HCT116 (cell line): ENCODE measurements at regions of chr2 and their contacts with region 1.

Region 1: GRCh38 chr2:168920504-168921157 is 19.5 kb downstream of the G6PC2 start:
- DNase-seq: peak; percentile 13
- ATAC-seq: peak; percentile 60
- H3K4me3 ChIP-seq: no peak overlapping the region
- H3K27ac ChIP-seq: no peak overlapping the region
- H3K4me1 ChIP-seq: no peaks in the 10 kb centered on the region
- H3K27me3 ChIP-seq: no peaks in the 10 kb centered on the region
- CTCF ChIP-seq: peak; percentile 39 to 73 (median 68)
- POLR2A ChIP-seq: no peak
- RAD21 ChIP-seq: peak; percentile 80

Region 2: DNA sequence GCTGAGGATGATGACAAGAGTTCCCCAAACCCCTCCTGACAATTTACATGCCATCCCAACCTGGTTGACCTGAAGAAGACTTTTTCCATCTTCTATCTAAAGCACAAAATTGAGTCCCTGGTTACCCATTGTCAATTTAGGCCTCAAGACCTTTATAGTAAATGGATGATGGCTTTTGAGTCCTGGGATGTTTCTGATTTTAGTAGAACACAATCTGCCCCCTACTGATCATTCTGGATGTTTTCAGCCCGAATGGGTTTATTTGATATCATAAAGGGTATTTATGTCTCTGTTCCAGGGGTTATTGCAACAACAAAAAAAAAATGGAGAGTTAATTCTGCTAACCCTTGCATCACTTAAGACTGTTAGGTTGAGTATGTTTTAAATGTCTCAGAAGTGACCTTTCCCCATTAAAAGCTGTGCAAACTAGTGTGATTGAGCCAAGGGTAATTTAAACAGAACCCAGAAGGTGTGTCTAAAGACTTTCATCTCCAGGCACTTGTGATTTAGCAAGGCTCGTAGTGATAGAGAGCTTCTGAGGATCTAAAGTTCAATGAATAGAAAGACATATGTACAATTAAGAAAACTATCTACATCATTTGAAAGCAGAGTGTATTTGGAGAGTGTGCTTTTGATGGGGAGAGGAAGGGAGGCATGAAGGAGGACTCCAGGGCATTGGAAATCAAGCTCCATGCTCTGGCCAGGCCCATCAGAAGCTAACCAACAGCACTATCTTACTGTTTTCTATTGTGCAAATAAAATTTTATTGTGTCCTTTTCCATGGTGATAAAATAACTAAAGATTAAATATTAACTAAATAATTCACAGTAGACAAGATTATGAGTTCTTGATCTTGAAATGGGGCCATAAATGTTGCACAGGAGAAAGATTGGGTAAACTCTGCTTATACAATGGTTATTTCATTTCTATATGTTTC is 214.8 kb before region 1 on chr2:
- CTCF ChIA-PET with region 1: no interaction called
- POLR2A ChIA-PET with region 1: no interaction called
- RAD21 ChIA-PET with region 1: no interaction called
- intact Hi-C with region 1: loop called (anchors 10 kb)
- DNase-seq: no peak
- ATAC-seq: no peak
- H3K4me3 ChIP-seq: no peak overlapping the region
- H3K27ac ChIP-seq: no peak overlapping the region
- H3K4me1 ChIP-seq: no peaks in the 10 kb centered on the region
- H3K27me3 ChIP-seq: no peaks in the 10 kb centered on the region
- CTCF ChIP-seq: peak; percentile 24 to 48 (median 35); a peak in 4 of 6 replicates
- POLR2A ChIP-seq: no peak
- RAD21 ChIP-seq: peak; percentile 57

Region 3: GRCh38 chr2:168773719-168774521 is 146.7 kb before region 1 on chr2:
- CTCF ChIA-PET with region 1: interaction called, 7 read pairs
- POLR2A ChIA-PET with region 1: no interaction called
- RAD21 ChIA-PET with region 1: no interaction called
- intact Hi-C with region 1: loop called (anchors 1 kb)
- DNase-seq: peak; percentile 52
- ATAC-seq: peak; percentile 91
- H3K4me3 ChIP-seq: no peak overlapping the region
- H3K27ac ChIP-seq: no peak overlapping the region
- H3K4me1 ChIP-seq: no peaks in the 10 kb centered on the region
- H3K27me3 ChIP-seq: no peaks in the 10 kb centered on the region
- CTCF ChIP-seq: peak; percentile 74 to 98 (median 94); a peak in 5 of 6 replicates
- POLR2A ChIP-seq: no peak
- RAD21 ChIP-seq: peak; percentile 86